ENCODE measurements at regions of chr2 and their contacts with region 1.

Region 1: DNA sequence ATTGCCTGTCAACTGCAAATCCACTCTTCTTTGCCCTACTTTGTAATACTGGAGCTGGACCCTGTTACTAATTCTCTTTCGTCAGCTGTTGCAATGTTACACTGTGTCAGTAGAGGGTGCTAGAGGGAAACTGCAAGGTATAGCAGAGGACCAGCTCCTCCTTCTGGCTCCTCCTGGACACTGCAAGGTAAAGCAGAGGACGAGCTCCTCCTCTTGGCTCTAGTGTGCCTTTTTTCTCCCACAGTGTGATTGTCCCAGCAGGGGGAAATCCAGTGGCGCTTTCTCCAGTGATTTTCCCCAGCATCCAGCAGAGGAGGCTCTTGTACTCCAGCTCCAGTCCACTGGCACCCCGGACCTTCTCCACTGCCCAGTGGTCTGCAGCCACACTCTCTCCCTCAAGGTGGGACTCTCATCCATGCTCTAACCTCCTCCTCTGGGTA is 95.6 kb downstream of the CAPN13 start:
- DNase-seq: peak; percentile 91
- H3K4me3 Mint-ChIP-seq: no peak overlapping the region
- H3K27ac Mint-ChIP-seq: no peak overlapping the region
- H3K4me1 Mint-ChIP-seq: peaks cover 9% of the 10 kb centered on the region
- H3K27me3 Mint-ChIP-seq: no peaks in the 10 kb centered on the region
- CTCF ChIP-seq: peak; percentile 100

Region 2: GRCh38 chr2:30178618-30179434 is 532.8 kb before region 1 on chr2:
- CTCF ChIA-PET with region 1: interaction called, 16 read pairs
- POLR2A ChIA-PET with region 1: no interaction called
- intact Hi-C with region 1: no loop called
- DNase-seq: peak; percentile 96
- H3K4me3 Mint-ChIP-seq: no peak overlapping the region
- H3K27ac Mint-ChIP-seq: peak overlapping the region; percentile 87
- H3K4me1 Mint-ChIP-seq: peaks cover 28% of the 10 kb centered on the region
- H3K27me3 Mint-ChIP-seq: no peaks in the 10 kb centered on the region
- CTCF ChIP-seq: no peak

Region 3: DNA sequence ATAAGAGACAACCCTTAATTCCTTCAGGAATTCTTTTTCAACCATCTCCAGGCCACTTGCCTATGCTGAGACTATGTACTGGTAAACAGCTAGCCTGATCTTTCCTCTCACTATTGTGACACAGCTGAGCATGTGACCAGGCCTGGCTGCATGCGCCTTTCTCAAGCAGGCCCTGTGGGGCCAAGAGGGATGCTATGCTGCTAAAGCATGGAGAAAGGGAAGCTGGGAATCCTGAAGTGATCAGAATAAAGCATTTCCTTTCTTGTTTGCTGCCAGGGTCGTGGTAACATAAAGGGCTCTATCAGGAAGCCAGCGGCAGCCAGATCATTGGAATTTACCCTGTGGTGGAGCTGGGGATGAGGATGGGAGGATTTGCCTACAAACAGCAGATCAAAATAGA is 294.4 kb before region 1 on chr2:
- CTCF ChIA-PET with region 1: no interaction called
- POLR2A ChIA-PET with region 1: no interaction called
- intact Hi-C with region 1: no loop called
- DNase-seq: no peak
- H3K4me3 Mint-ChIP-seq: no peak overlapping the region
- H3K27ac Mint-ChIP-seq: no peak overlapping the region
- H3K4me1 Mint-ChIP-seq: peaks cover 6% of the 10 kb centered on the region
- H3K27me3 Mint-ChIP-seq: no peaks in the 10 kb centered on the region
- CTCF ChIP-seq: no peak

Region 4: GRCh38 chr2:30691948-30692828 is 19.5 kb before region 1 on chr2:
- CTCF ChIA-PET with region 1: interaction called, 37 read pairs
- POLR2A ChIA-PET with region 1: no interaction called
- intact Hi-C with region 1: no loop called
- DNase-seq: peak; percentile 29
- H3K4me3 Mint-ChIP-seq: no peak overlapping the region
- H3K27ac Mint-ChIP-seq: no peak overlapping the region
- H3K4me1 Mint-ChIP-seq: no peaks in the 10 kb centered on the region
- H3K27me3 Mint-ChIP-seq: peaks cover 17% of the 10 kb centered on the region
- CTCF ChIP-seq: peak; percentile 36

Region 5: DNA sequence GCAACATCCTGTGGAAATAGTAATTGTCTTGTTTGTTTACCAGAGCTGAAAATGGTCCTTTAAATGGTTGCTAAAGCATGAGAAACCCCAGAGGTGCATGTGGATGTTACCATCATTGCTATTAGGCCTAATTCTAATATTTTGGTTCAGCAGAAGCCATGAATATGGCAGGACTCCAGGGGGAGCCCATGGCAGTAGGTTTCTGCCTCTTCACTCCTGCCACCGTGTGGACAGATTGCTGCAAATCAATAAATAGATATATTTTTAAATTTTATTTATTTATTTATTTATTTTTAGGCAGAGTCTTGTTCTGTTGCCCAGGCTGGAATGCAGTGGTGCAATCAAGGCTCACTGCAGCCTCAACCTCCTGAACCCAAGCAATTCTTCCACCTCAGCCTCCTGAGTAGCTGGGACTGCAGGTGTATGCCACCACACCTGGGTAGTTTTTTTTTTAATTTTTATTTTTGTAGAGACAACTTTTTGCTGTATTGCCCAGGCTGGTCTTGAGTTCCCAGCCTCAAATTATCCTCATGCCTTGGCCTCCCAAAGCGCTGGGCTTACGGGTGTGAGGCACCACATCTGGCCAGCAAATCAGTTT is 150.5 kb after region 1 on chr2:
- CTCF ChIA-PET with region 1: interaction called, 7 read pairs
- POLR2A ChIA-PET with region 1: no interaction called
- intact Hi-C with region 1: loop called (anchors 1 kb)
- DNase-seq: peak; percentile 83
- H3K4me3 Mint-ChIP-seq: no peak overlapping the region
- H3K27ac Mint-ChIP-seq: no peak overlapping the region
- H3K4me1 Mint-ChIP-seq: no peaks in the 10 kb centered on the region
- H3K27me3 Mint-ChIP-seq: no peaks in the 10 kb centered on the region
- CTCF ChIP-seq: peak; percentile 79

Region 6: GRCh38 chr2:31434911-31435310 is 723.2 kb after region 1 on chr2:
- CTCF ChIA-PET with region 1: interaction called, 3 read pairs
- POLR2A ChIA-PET with region 1: no interaction called
- intact Hi-C with region 1: loop called (anchors 2 kb)
- DNase-seq: peak; percentile 55
- H3K4me3 Mint-ChIP-seq: no peak overlapping the region
- H3K27ac Mint-ChIP-seq: no peak overlapping the region
- H3K4me1 Mint-ChIP-seq: peaks cover 8% of the 10 kb centered on the region
- H3K27me3 Mint-ChIP-seq: no peaks in the 10 kb centered on the region
- CTCF ChIP-seq: peak; percentile 38

Measured in MCF 10A (cell line).